H1 (cell line): ENCODE measurements at regions of chr1 and their contacts with region 1.

Region 1: DNA sequence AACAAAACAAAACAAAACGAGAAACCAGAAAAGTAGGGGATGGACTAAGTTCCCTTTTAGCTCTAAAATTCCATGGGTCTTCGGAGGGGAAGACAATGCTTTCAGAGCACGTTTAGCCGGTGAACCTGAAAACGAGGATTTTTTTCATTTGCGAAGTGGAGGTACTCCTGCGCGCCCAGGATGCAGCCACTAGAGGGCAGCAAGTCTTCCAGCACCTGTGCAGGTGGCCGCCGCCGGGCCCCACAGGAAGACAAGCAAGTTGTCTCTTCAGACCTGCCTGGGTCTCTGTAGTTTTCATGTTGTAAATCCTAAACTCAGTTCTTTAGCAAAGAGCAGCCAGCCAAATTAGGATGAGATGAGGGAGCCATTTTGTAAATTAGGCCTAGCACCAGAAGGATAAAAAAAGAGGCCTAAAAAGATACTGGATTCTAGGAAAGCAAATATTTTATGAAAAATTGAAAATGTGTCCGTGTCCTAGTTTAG is 17.7 kb upstream of the SNX27 start:
- DNase-seq: peak; percentile 80 to 92
- H3K4me3 ChIP-seq: peak overlapping the region; percentile 26 to 68 (median 44); a peak in 7 of 8 replicates
- H3K27ac ChIP-seq: no peak overlapping the region
- H3K4me1 ChIP-seq: peaks cover 0 to 2% (median 0%) of the 10 kb centered on the region in 4 experiments; a peak in 1 of 7 replicates
- H3K27me3 ChIP-seq: no peaks in the 10 kb centered on the region; a peak in 1 of 7 replicates
- CTCF ChIP-seq: peak; percentile 85 to 96 (median 95)
- EP300 ChIP-seq: no peak
- POLR2A ChIP-seq: no peak
- RAD21 ChIP-seq: peak; percentile 78 to 86

Region 2: GRCh38 chr1:151579436-151579835 is 14.7 kb before region 1 on chr1:
- CTCF ChIA-PET with region 1: interaction called, 12 read pairs
- POLR2A ChIA-PET with region 1: interaction called, 5 read pairs
- DNase-seq: no peak
- H3K4me3 ChIP-seq: no peak overlapping the region
- H3K27ac ChIP-seq: no peak overlapping the region
- H3K4me1 ChIP-seq: peaks cover 0 to 5% (median under 1%) of the 10 kb centered on the region in 4 experiments; a peak in 2 of 7 replicates
- H3K27me3 ChIP-seq: no peaks in the 10 kb centered on the region
- CTCF ChIP-seq: no peak
- EP300 ChIP-seq: no peak
- POLR2A ChIP-seq: no peak
- RAD21 ChIP-seq: no peak

Region 3: GRCh38 chr1:151604291-151604690 is 10.1 kb after region 1 on chr1:
- CTCF ChIA-PET with region 1: interaction called, 15 read pairs
- POLR2A ChIA-PET with region 1: no interaction called
- DNase-seq: no peak
- H3K4me3 ChIP-seq: no peak overlapping the region
- H3K27ac ChIP-seq: no peak overlapping the region
- H3K4me1 ChIP-seq: peaks cover 0 to 3% (median 0%) of the 10 kb centered on the region in 4 experiments; a peak in 1 of 7 replicates
- H3K27me3 ChIP-seq: no peaks in the 10 kb centered on the region
- CTCF ChIP-seq: no peak
- EP300 ChIP-seq: no peak
- POLR2A ChIP-seq: no peak
- RAD21 ChIP-seq: no peak

Region 4: DNA sequence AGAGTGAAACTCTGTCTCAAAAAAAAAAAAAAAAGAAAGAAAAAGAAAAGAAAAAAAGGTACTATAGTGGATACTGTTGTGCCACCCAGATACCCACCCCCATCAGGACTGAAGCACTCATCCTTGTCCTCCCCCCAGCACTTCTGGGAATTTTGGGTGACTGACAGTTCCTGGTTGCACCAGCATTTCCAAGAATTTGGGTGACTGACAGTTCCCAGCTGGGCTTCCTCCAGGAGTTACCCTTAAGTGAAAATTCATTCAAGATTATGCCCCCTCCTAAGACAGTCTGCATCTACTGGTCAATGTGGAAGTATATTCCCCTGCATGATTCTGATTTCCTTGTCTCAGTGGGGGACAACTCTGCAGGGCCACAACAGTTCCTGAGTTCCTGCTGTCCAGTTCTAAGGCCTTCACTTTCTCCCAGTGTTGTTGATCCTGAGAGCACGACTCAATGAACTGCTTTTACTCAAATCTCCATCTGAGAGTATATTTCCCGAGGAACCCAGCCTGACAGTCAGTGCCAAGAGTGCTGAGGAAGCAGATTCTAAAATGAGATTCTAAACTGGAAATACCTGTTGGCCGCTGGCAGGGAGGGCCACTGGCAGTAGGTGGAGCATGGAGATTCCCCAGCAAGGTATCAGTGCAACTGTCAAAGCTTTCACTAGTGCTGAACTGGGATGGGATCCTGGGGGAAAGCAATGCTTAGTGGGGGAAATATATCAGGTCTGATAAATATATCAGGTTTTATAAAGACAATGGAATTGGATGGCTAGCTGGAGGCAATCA is 145.6 kb after region 1 on chr1:
- CTCF ChIA-PET with region 1: interaction called, 15 read pairs
- POLR2A ChIA-PET with region 1: no interaction called
- DNase-seq: no peak
- H3K4me3 ChIP-seq: no peak overlapping the region
- H3K27ac ChIP-seq: no peak overlapping the region
- H3K4me1 ChIP-seq: peaks cover 0 to 5% (median 3%) of the 10 kb centered on the region in 4 experiments; a peak in 3 of 7 replicates
- H3K27me3 ChIP-seq: no peaks in the 10 kb centered on the region; a peak in 1 of 7 replicates
- CTCF ChIP-seq: no peak
- EP300 ChIP-seq: no peak
- POLR2A ChIP-seq: no peak
- RAD21 ChIP-seq: peak in 1 of 2 experiments; percentile 6; a peak in 1 of 4 replicates